AG04450 (cell line): ENCODE measurements at regions of chr19 and their contacts with region 1.

Region 1: DNA sequence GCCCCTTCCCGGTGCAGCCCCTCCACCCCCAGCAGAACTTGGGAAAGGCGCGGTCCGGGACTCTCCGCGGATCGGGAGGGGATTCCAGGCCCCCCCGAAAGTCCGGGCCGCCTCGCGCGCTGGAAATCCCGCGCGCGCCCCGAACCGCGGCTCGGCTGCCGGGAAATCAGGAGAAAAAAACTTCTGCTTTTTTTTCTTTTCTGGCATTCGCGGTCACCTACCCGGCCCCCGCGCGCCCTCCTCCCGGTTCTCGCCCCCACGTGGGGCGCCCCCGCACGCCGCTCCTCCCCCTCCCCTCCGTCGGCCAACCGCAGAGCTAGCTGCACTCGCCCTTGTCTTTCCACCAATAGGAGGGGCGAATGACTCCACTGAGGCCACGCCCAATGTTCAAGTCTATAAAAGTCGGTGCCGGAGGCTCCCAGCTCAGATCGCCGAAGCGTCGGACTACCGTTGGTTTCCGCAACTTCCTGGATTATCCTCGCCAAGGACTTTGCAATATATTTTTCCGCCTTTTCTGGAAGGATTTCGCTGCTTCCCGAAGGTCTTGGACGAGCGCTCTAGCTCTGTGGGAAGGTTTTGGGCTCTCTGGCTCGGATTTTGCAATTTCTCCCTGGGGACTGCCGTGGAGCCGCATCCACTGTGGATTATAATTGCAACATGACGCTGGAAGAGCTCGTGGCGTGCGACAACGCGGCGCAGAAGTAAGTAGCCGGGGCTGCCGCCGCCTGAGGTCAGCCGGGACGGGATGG is at the start of gene GADD45B:
- DNase-seq: peak; percentile 97
- H3K4me3 ChIP-seq: peak within 1 kb of the TSS; percentile 94
- H3K27ac ChIP-seq: peak within 1 kb of the TSS; percentile 77
- H3K27me3 ChIP-seq: no peaks in the 10 kb centered on the region
- CTCF ChIP-seq: no peak
- polyA plus RNA-seq, gene GADD45B: 18.5 and 24.8 TPM in 2 replicates

Region 2: DNA sequence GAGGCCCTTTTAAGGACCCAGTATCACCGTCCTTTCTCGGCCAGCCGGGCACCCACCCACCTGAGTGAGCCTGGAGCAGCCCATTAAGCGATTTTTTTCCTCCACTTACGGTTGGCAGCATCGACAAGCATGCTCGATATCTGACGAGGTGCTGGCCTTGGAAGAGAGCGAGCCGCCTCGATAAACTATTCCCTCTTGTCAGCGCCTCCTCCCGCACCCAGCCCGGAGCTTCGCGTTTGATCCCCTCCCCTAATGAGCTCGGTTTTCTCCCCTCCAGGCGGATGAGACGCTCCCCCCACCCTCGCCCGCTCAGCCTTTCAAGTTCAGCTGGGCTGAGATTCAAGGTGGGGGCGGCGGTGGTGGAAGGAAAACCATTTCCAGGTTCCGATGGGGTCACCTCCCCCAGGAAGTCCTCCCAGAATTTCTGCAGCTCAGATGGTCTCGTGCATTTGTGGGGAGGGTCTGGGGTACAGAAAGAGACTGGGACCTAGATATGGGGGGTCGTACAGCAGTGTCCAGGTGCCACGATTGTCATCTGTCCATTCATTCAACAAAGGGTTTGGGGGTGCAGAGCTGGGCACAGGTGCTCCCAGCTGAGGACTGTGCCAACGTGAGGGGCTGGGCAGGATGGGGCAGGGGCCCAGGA is 741.4 kb before region 1 on chr19:
- CTCF ChIA-PET with region 1: no interaction called
- POLR2A ChIA-PET with region 1: no interaction called
- DNase-seq: no peak
- H3K4me3 ChIP-seq: no peak overlapping the region
- H3K27ac ChIP-seq: no peak overlapping the region
- H3K27me3 ChIP-seq: peaks cover 41% of the 10 kb centered on the region
- CTCF ChIP-seq: no peak

Region 3: GRCh38 chr19:2455851-2456570 is 19.9 kb before region 1 on chr19:
- CTCF ChIA-PET with region 1: no interaction called
- POLR2A ChIA-PET with region 1: interaction called, 46 read pairs
- DNase-seq: no peak
- H3K4me3 ChIP-seq: peak overlapping the region; percentile 86
- H3K27ac ChIP-seq: no peak overlapping the region
- H3K27me3 ChIP-seq: no peaks in the 10 kb centered on the region
- CTCF ChIP-seq: no peak

Region 4: DNA sequence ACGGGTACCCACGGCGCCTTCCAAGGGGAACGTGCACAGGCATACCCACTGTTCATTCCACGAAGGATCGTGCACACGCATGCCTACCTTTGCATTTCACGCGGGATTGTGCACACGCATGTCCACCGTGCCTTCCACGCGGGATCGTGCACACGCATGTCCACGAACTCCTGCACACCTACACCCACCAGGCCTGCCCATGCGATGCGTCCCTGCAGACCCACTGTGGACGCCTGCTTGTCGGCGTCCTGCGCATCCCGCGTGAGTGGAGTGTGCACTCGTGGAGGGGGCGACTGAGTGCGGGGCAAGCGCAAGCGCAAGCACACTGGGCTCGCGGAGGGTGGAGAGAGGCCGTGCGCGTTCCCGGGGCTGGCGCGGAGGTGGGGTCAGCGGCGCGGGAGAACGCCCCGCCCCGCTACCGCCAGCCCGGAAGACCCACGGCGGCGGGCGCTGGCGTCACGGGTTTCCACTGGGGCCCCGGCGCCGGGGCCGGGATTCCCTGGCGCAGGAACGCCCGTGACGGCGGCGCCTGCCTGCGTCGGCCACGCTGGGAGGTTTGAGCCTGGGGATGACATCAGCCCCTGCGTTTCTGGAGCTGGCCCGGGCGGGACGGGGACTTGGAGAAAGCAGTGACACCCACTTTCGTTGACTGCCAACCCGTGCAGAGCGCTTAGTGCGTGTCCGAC is 18.7 kb after region 1 on chr19:
- CTCF ChIA-PET with region 1: interaction called, 3 read pairs
- POLR2A ChIA-PET with region 1: interaction called, 75 read pairs
- DNase-seq: no peak
- H3K4me3 ChIP-seq: peak overlapping the region; percentile 72
- H3K27ac ChIP-seq: peak overlapping the region; percentile 81
- H3K27me3 ChIP-seq: no peaks in the 10 kb centered on the region
- CTCF ChIP-seq: no peak

Region 5: GRCh38 chr19:2524838-2525723 is 49.2 kb after region 1 on chr19:
- CTCF ChIA-PET with region 1: interaction called, 3 read pairs
- POLR2A ChIA-PET with region 1: interaction called, 26 read pairs
- DNase-seq: no peak
- H3K4me3 ChIP-seq: no peak overlapping the region
- H3K27ac ChIP-seq: peak overlapping the region; percentile 39
- H3K27me3 ChIP-seq: no peaks in the 10 kb centered on the region
- CTCF ChIP-seq: no peak

Region 6: DNA sequence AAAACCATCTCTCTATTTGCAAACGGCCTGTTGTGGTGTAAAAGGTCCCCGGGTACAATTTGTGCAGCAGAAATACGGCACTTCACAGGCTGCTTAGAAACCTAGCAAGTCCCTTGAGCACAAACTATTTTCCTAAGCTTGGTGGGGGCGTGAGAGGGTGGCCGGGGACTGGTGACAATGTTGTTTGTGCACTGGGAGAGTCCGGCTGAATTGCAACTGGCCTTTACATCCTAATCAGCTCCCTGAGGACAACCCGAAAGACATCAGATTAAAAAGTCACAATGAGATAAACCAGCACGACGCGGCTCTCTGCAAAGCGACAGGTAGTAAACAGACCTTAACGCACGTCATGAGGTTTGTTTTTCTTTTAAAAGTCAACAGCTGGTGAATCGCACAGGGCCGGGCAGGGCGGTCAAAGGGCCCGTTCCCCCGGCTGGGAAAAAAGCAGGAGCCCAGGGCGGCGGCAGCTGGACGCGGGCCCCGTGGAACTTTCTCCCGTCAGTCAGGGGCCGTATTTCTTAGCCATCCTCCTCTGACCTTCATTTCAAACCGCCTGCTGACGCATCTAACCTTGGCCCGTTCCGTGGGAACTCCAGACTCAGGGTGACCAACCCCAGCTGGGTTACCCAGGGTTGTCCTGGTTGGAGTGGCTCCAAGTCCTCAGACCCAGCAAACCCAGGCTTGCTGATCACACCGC is 112.4 kb after region 1 on chr19:
- CTCF ChIA-PET with region 1: no interaction called
- POLR2A ChIA-PET with region 1: interaction called, 27 read pairs
- DNase-seq: no peak
- H3K4me3 ChIP-seq: no peak overlapping the region
- H3K27ac ChIP-seq: no peak overlapping the region
- H3K27me3 ChIP-seq: no peaks in the 10 kb centered on the region
- CTCF ChIP-seq: no peak

Region 7: DNA sequence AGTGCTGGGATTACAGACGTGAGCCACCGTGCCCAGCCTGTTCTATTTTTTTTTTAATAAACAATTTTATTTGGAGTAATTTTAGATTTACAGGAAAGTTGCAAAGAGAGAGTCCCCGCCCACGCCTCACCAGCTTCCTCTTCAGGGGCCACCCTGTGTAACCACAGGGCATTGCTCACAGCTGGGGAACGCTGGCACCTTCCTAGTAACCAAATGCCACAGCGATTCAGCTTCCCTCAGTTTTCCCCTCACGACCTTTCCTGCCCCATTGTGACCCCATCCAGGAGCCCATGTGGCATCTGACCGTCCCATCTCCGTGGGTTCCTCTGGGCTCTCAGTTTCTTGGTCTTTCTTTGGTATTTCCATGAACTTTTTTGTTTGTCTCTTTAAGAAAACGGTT is 142.7 kb after region 1 on chr19:
- CTCF ChIA-PET with region 1: interaction called, 10 read pairs
- POLR2A ChIA-PET with region 1: interaction called, 19 read pairs
- DNase-seq: no peak
- H3K4me3 ChIP-seq: no peak overlapping the region
- H3K27ac ChIP-seq: no peak overlapping the region
- H3K27me3 ChIP-seq: no peaks in the 10 kb centered on the region
- CTCF ChIP-seq: no peak